Common myeloid progenitor, CD34-positive (primary cell): ENCODE measurements at regions of chr21 and their contacts with region 1.

Region 1: DNA sequence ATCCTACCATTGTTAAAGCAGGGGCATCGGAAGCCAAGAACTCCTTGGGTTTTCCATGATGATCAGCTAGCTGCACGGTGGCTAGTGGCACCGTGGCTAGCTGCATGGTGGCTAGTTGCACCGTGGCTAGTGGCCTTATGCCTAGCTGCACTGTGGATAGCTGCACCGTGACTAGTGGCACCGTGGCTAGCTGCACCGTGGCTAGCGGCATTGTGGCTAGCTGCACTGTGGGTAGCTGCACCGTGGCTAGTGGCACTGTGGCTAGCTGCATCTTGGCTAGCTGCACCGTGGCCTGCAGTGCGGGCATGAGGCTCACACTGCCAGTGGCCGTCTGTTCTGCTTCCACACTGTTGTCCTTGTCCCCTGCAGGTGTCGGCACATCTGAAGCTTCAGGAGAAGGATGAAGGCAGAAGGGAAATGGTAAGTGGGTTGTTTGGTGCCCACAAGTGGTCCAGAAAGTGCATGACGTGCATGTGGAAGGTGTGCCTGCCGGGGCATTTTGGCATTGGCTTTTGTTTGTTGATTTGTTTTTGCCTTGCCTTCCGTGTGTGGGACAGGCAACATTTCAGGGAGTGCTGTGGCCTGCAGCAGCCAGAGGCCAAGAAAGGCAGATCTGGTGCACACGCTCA is 38.6 kb downstream of the TFF3 start:
- DNase-seq: peak in 1 of 3 donors; percentile 32
- H3K4me3 ChIP-seq: no peak overlapping the region
- H3K27ac ChIP-seq: no peak overlapping the region
- H3K4me1 ChIP-seq: peaks cover 0 to 8% (median 0%) of the 10 kb centered on the region in 4 experiments
- H3K27me3 ChIP-seq: no peaks in the 10 kb centered on the region

Region 2: GRCh38 chr21:41885341-41886029 is 391.2 kb before region 1 on chr21:
- CTCF ChIA-PET with region 1: no interaction called
- POLR2A ChIA-PET with region 1: no interaction called
- DNase-seq: peak; percentile 36 to 86 (median 75)
- H3K4me3 ChIP-seq: no peak overlapping the region
- H3K27ac ChIP-seq: peak overlapping the region; percentile 18 to 33
- H3K4me1 ChIP-seq: peaks cover 8 to 32% (median 22%) of the 10 kb centered on the region in 4 experiments
- H3K27me3 ChIP-seq: no peaks in the 10 kb centered on the region

Region 3: GRCh38 chr21:42145569-42146272 is 130.9 kb before region 1 on chr21:
- CTCF ChIA-PET with region 1: interaction called, 48 read pairs
- POLR2A ChIA-PET with region 1: no interaction called
- DNase-seq: peak; percentile 68 to 86 (median 82)
- H3K4me3 ChIP-seq: no peak overlapping the region
- H3K27ac ChIP-seq: no peak overlapping the region
- H3K4me1 ChIP-seq: peaks cover 0 to 15% (median 9%) of the 10 kb centered on the region in 4 experiments
- H3K27me3 ChIP-seq: no peaks in the 10 kb centered on the region

Region 4: DNA sequence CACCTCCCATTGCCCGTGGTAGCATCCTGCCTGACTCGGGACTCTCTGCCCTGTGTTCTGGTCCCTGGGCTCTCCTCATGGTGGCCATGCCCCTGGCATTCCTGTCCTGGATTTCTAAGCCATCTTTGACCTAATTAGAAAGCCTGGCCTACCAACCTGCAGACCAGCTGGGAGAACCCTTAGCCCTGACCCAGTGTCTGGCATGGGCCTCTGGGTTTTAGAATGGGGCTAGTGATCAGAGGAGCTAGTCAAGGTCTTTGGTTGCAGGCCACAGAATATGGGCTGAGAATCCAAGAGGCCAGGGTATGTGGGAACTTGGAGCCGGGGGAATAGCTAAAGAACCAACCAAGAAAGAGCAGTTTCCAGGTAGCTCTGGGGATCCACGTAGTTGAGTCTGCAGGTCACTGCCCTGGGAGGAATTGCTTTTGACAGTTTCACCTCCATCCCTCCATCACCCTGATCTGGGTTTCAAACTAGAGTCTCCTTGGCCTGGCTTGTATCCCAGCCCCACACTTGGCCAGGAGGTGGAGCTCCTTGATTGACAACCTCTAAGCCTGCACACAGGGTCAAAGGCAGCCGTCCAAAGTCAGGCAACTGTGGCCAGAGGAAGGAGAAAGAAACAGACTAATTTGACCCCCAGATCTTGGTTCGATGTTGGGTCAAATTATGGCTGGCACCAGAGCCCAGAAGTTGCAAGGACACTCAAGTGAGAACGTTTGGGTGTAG is 112.4 kb before region 1 on chr21:
- CTCF ChIA-PET with region 1: interaction called, 28 read pairs
- POLR2A ChIA-PET with region 1: no interaction called
- DNase-seq: peak; percentile 49 to 64 (median 54)
- H3K4me3 ChIP-seq: no peak overlapping the region
- H3K27ac ChIP-seq: no peak overlapping the region
- H3K4me1 ChIP-seq: peaks cover 0 to 30% (median 26%) of the 10 kb centered on the region in 4 experiments
- H3K27me3 ChIP-seq: no peaks in the 10 kb centered on the region